ENCODE measurements at regions of chr6 and their contacts with region 1.

Region 1: DNA sequence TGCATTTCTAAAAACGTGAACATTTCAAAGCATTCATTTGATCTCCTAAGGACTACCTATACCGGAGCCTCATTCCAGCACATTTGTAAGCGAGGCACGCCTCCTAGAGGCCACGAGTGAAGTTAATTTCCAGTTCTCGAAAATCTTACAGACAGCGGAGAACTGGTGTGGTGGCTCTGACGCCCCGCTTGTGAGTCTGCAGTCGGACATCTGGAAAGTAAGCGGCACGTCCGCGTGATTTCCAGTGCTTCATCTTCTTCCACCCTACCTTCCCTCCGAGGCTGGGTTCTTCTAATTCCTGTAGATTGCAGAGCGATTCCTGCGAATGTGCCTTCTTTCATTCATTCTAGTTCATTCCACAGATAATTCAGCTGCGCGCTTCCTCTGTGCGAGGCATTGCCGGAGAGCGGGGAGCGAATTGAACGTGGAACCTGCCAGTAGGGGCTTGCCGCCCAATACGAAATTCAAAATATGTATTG is 810 bp upstream of the PRIM2 start:
- DNase-seq: peak; percentile 80 to 93 (median 86)
- H3K4me3 ChIP-seq: peak overlapping the region; percentile 24 to 64 (median 55)
- H3K27ac ChIP-seq: peak overlapping the region in 3 of 5 donors; percentile 4 to 84 (median 27)
- H3K4me1 ChIP-seq: peaks cover 5 to 9% of the 10 kb centered on the region in 2 donors
- H3K27me3 ChIP-seq: no peaks in the 10 kb centered on the region
- CTCF ChIP-seq: peak; percentile 56 to 87 (median 87)
- POLR2A ChIP-seq: peak in 1 of 2 donors; percentile 35

Region 2: DNA sequence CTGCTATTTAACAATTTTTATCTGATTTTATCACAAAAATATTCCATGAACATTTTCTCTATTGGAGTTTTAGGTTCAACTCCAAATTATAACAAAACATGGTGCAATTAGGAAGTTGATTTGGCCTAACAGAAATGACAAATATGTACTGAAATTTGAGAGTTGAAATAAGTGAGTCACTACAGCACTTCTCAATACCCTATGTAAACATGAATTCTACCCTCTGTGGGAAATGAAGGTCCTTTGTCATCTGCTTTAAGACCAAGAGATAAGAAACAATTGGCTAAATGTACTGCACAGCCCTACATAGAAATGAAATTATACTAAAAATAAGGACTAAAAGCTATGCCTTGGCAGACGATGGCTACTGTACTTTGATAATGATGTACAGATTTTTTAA is 447.9 kb before region 1 on chr6:
- intact Hi-C with region 1: no loop called
- DNase-seq: no peak
- H3K4me3 ChIP-seq: no peak overlapping the region
- H3K27ac ChIP-seq: no peak overlapping the region
- H3K4me1 ChIP-seq: peaks cover 0 to 1% of the 10 kb centered on the region in 2 donors
- H3K27me3 ChIP-seq: no peaks in the 10 kb centered on the region
- CTCF ChIP-seq: no peak
- POLR2A ChIP-seq: no peak

Region 3: DNA sequence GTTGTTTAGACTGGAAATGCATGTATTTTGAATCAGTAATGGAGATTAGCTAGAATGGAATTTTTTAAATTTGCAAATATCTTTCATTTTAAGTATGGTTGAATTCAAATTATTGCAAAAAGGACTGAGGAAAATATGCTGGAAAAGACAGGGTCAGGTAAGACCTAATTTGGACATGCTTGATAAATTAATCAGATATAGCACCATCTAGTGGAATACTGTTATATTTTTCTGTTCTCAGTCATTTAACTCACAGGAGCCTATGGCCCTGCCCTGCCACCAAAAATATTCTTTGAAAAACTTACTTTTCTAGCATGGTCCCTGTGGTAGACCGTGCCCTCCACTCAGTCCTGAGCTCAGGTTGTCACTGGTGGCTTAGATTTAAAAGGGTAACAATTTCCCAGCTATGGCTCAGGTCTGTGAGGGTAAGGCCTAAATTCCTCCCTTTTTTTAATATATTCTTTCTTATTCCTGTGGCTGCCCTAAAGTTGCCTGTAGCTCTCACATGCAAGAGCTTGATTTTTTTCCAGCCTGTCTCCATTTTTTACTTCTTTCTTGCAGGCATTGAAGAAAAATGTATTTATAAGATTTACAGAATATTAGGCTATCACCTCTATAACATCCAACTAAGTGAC is 295.4 kb before region 1 on chr6:
- intact Hi-C with region 1: loop called in 1 of 2 experiments (anchors 5 kb)
- DNase-seq: no peak
- H3K4me3 ChIP-seq: no peak overlapping the region
- H3K27ac ChIP-seq: no peak overlapping the region
- H3K4me1 ChIP-seq: no peaks in the 10 kb centered on the region
- H3K27me3 ChIP-seq: no peaks in the 10 kb centered on the region
- CTCF ChIP-seq: peak; percentile 46 to 71 (median 60)
- POLR2A ChIP-seq: no peak

Region 4: DNA sequence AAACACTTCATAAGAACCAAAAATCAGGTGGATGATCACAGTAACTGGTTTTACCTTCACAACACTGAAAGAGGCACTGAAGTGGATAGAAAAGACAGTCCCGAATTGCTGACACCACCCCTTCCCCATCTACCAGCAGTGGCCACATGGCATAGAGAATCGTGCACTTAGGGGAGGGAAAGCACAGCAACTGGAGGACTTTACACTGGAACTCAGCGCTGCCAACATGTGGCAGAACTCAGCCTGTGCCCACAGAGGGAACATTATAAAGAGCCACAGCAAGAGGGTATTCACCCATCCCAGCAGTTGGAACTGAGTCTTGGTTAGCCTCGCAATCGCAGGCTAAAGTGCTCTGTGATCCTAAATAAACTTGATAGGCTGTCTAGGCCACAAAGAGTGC is 276.6 kb before region 1 on chr6:
- intact Hi-C with region 1: loop called in 1 of 2 experiments (anchors 10 kb)
- DNase-seq: no peak
- H3K4me3 ChIP-seq: no peak overlapping the region
- H3K27ac ChIP-seq: no peak overlapping the region
- H3K4me1 ChIP-seq: no peaks in the 10 kb centered on the region
- H3K27me3 ChIP-seq: no peaks in the 10 kb centered on the region
- CTCF ChIP-seq: no peak
- POLR2A ChIP-seq: no peak